ENCODE measurements at regions of chr7 and their contacts with region 1.

Region 1: DNA sequence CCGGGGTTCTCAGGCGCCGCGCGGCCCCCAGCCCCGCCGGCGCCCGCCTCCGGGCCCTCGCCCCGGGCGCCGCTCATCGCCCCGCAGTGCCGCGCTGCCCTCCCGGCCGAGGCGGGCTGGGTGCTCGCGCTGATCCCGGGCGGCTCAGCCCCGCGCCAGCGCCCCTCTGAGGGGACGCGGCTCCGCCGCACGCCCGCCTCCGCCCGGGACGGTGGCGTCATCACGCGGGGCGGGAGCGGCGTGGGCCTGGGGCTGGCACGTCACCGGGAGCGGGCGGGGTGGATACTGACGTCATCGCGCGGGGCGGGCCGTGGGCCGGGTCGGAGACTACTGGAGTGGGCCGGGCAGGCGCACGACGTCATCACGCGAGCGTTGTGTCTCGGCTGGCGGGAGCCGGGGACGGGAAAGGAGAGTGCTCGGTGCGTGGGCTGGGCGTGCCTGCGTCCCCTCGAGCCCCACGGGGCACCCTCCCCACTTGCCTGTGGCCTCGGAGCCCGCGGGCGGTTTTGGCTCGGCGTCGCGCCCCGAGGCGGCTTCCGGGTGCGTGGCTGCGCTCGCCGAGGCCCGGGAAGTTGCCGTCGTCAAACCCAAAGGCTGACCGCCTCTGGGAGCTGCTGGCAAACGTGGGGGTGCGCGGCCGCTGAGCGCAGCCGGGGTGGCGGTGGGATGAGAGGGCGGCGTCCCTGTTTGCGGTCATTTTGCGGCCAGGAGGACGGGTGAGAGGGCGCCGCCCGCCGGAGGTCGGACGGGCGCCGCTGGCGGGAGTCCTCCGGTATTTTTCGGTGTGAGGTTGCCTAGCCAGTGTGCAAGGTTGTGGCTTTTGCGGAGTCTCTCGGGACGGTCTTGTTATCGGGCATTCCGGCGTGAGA is at the start of gene ESYT2:
- DNase-seq: peak; percentile 99
- H3K4me3 Mint-ChIP-seq: peak within 1 kb of the TSS; percentile 85
- H3K27ac Mint-ChIP-seq: peak within 1 kb of the TSS; percentile 87
- H3K4me1 Mint-ChIP-seq: peaks cover 33% of the 10 kb centered on the region
- H3K27me3 Mint-ChIP-seq: no peaks in the 10 kb centered on the region
- total RNA-seq, gene ESYT2: 62.4 to 64.2 TPM

Region 2: GRCh38 chr7:158422887-158423560 is 406.6 kb before region 1 on chr7:
- CTCF ChIA-PET with region 1: no interaction called
- POLR2A ChIA-PET with region 1: no interaction called
- intact Hi-C with region 1: no loop called
- DNase-seq: no peak
- H3K4me3 Mint-ChIP-seq: no peak overlapping the region
- H3K27ac Mint-ChIP-seq: no peak overlapping the region
- H3K4me1 Mint-ChIP-seq: no peaks in the 10 kb centered on the region
- H3K27me3 Mint-ChIP-seq: no peaks in the 10 kb centered on the region

Region 3: GRCh38 chr7:158704704-158705468 is 124.7 kb before region 1 on chr7 and contains the start of gene NCAPG2:
- CTCF ChIA-PET with region 1: interaction called, 4 read pairs
- POLR2A ChIA-PET with region 1: interaction called, 4 read pairs
- intact Hi-C with region 1: loop called (anchors 1 kb)
- DNase-seq: peak; percentile 98
- H3K4me3 Mint-ChIP-seq: peak within 1 kb of the TSS; percentile 84
- H3K27ac Mint-ChIP-seq: peak within 1 kb of the TSS; percentile 82
- H3K4me1 Mint-ChIP-seq: peaks cover 40% of the 10 kb centered on the region
- H3K27me3 Mint-ChIP-seq: no peaks in the 10 kb centered on the region
- total RNA-seq, gene NCAPG2: 145 to 149 TPM

Region 4: GRCh38 chr7:158798741-158799140 is 30.8 kb before region 1 on chr7:
- CTCF ChIA-PET with region 1: no interaction called
- POLR2A ChIA-PET with region 1: no interaction called
- intact Hi-C with region 1: no loop called
- DNase-seq: no peak
- H3K4me3 Mint-ChIP-seq: no peak overlapping the region
- H3K27ac Mint-ChIP-seq: no peak overlapping the region
- H3K4me1 Mint-ChIP-seq: peaks cover 32% of the 10 kb centered on the region
- H3K27me3 Mint-ChIP-seq: no peaks in the 10 kb centered on the region

Region 5: DNA sequence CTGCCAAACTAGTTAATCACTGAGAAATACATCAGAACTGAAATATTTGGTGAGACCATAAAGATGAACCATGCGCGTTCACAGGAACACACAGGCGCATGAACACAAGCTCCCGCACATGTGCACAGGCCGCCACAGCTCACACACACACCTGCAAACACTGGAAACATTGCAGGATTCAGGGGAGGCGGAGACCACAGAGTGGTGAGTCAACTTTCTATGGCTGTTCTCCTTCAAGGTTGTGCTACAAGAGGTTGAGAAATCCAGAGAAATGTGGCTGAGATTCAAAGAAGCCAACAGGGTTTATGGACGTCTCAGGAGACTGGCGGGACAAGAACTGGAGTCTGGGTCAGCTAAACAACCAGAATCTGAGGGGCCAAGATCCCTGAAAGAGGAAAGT is 18.1 kb before region 1 on chr7:
- CTCF ChIA-PET with region 1: interaction called, 5 read pairs
- POLR2A ChIA-PET with region 1: interaction called, 22 read pairs
- intact Hi-C with region 1: loop called (anchors 1 kb)
- DNase-seq: peak; percentile 82
- H3K4me3 Mint-ChIP-seq: peak overlapping the region; percentile 60
- H3K27ac Mint-ChIP-seq: peak overlapping the region; percentile 91
- H3K4me1 Mint-ChIP-seq: peaks cover 76% of the 10 kb centered on the region
- H3K27me3 Mint-ChIP-seq: no peaks in the 10 kb centered on the region

Region 6: GRCh38 chr7:158818325-158819213 is 11.0 kb before region 1 on chr7:
- CTCF ChIA-PET with region 1: interaction called, 5 read pairs
- POLR2A ChIA-PET with region 1: interaction called, 22 read pairs
- intact Hi-C with region 1: loop called (anchors 1 kb)
- DNase-seq: peak; percentile 85
- H3K4me3 Mint-ChIP-seq: peak overlapping the region; percentile 78
- H3K27ac Mint-ChIP-seq: peak overlapping the region; percentile 95
- H3K4me1 Mint-ChIP-seq: peaks cover 85% of the 10 kb centered on the region
- H3K27me3 Mint-ChIP-seq: no peaks in the 10 kb centered on the region

Region 7: GRCh38 chr7:158847451-158847866 is 17.9 kb after region 1 on chr7:
- CTCF ChIA-PET with region 1: interaction called, 3 read pairs
- POLR2A ChIA-PET with region 1: interaction called, 14 read pairs
- intact Hi-C with region 1: loop called (anchors 1 kb)
- DNase-seq: peak; percentile 29
- H3K4me3 Mint-ChIP-seq: peak overlapping the region; percentile 63
- H3K27ac Mint-ChIP-seq: peak overlapping the region; percentile 82
- H3K4me1 Mint-ChIP-seq: peaks cover 33% of the 10 kb centered on the region
- H3K27me3 Mint-ChIP-seq: no peaks in the 10 kb centered on the region

Region 8: GRCh38 chr7:158856883-158857668 is 27.5 kb after region 1 on chr7:
- CTCF ChIA-PET with region 1: interaction called, 5 read pairs
- POLR2A ChIA-PET with region 1: interaction called, 3 read pairs
- intact Hi-C with region 1: loop called (anchors 1 kb)
- DNase-seq: no peak
- H3K4me3 Mint-ChIP-seq: peak overlapping the region; percentile 98
- H3K27ac Mint-ChIP-seq: peak overlapping the region; percentile 45
- H3K4me1 Mint-ChIP-seq: peaks cover 19% of the 10 kb centered on the region
- H3K27me3 Mint-ChIP-seq: no peaks in the 10 kb centered on the region

Measured in activated CD4-positive, alpha-beta memory T cell treated with anti-CD3 and anti-CD28 coated beads for 36 hours (primary cell).